ENCODE measurements at regions of chr2 and their contacts with region 1.

Region 1: DNA sequence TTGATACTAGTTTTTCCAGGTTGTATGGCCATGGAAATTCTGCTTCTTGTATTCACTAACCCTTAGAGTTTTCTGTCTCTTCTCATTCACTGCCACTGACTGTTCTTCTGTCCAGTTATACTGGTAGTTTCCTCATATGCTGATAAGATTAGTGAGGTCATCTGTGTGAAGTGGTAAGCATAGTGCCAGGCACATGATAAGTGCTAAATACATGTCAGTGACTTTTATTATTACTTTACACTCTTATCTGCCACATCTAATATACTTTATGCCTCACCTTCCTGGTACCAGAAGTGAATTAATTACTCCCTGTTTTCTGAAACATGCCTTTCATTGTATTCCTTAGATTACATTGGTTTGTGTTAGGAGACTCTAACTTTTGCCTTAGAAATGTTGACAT is 91.3 kb downstream of the NBEAL1 start:
- DNase-seq: no peak
- ATAC-seq: no peak
- H3K4me3 ChIP-seq: no peak overlapping the region
- H3K27ac ChIP-seq: no peak overlapping the region
- H3K4me1 ChIP-seq: no peaks in the 10 kb centered on the region; the same call in 1 of the 2 replicates
- H3K27me3 ChIP-seq: no peaks in the 10 kb centered on the region
- CTCF ChIP-seq: no peak
- POLR2A ChIP-seq: no peak
- RAD21 ChIP-seq: no peak

Region 2: GRCh38 chr2:202808754-202809153 is 297.2 kb before region 1 on chr2:
- CTCF ChIA-PET with region 1: no interaction called
- POLR2A ChIA-PET with region 1: no interaction called
- dilution Hi-C with region 1: no loop called
- in situ Hi-C with region 1: no loop called
- intact Hi-C with region 1: no loop called
- DNase-seq: no peak
- ATAC-seq: no peak
- H3K4me3 ChIP-seq: no peak overlapping the region
- H3K27ac ChIP-seq: no peak overlapping the region
- H3K4me1 ChIP-seq: peaks cover 5% of the 10 kb centered on the region
- H3K27me3 ChIP-seq: no peaks in the 10 kb centered on the region
- CTCF ChIP-seq: no peak
- POLR2A ChIP-seq: no peak
- RAD21 ChIP-seq: no peak

Region 3: DNA sequence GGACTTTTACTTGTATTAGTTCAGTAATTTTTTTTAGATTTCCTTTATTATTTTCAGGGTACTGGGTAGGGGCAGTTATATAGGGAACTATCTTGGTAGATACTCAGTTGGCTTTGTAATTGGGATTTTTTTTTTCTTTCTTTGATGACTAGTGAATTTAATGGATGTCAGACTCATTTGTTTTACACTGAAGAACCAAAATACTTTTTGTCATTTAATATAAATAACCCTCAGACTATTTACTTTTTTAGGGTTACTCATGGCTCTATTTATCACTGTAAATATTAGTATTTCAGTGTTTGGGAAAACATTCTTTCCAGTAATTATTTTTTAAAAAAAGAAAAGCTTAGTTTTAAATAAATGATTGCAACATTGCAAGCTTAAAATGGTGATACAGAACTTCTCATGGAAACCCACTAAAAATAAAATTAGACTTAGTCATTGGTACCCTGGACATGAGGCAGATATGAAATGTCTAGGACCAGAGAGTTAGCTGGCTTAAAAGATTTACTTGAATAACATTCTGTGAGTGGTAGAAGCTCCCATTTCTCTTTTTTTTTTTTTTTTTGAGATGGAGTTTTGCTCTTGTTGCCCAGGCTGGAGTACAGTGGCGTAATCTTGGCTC is 58.4 kb after region 1 on chr2:
- CTCF ChIA-PET with region 1: no interaction called
- POLR2A ChIA-PET with region 1: no interaction called
- dilution Hi-C with region 1: no loop called
- in situ Hi-C with region 1: no loop called
- intact Hi-C with region 1: loop called (anchors 10 kb)
- DNase-seq: peak; percentile 80
- ATAC-seq: peak; percentile 98
- H3K4me3 ChIP-seq: no peak overlapping the region
- H3K27ac ChIP-seq: peak overlapping the region; percentile 30; the same call in 1 of the 2 replicates
- H3K4me1 ChIP-seq: peaks cover 2% of the 10 kb centered on the region; the same call in 1 of the 2 replicates
- H3K27me3 ChIP-seq: no peaks in the 10 kb centered on the region
- CTCF ChIP-seq: no peak
- POLR2A ChIP-seq: no peak
- RAD21 ChIP-seq: no peak

Region 4: GRCh38 chr2:203280428-203281064 is 174.6 kb after region 1 on chr2:
- CTCF ChIA-PET with region 1: no interaction called
- POLR2A ChIA-PET with region 1: no interaction called
- dilution Hi-C with region 1: no loop called
- in situ Hi-C with region 1: no loop called
- intact Hi-C with region 1: no loop called
- DNase-seq: no peak
- ATAC-seq: peak; percentile 35
- H3K4me3 ChIP-seq: no peak overlapping the region
- H3K27ac ChIP-seq: no peak overlapping the region
- H3K4me1 ChIP-seq: no peaks in the 10 kb centered on the region
- H3K27me3 ChIP-seq: no peaks in the 10 kb centered on the region
- CTCF ChIP-seq: no peak
- POLR2A ChIP-seq: no peak
- RAD21 ChIP-seq: no peak

Measured in IMR-90 (cell line).